ENCODE measurements at regions of chr10 and their contacts with region 1.

Region 1: GRCh38 chr10:77311186-77311585 is 326.4 kb downstream of the KCNMA1 start:
- DNase-seq: no peak
- H3K4me3 ChIP-seq: no peak overlapping the region
- H3K27ac ChIP-seq: no peak overlapping the region
- H3K4me1 ChIP-seq: no peaks in the 10 kb centered on the region
- H3K27me3 ChIP-seq: no peaks in the 10 kb centered on the region
- CTCF ChIP-seq: no peak

Region 2: DNA sequence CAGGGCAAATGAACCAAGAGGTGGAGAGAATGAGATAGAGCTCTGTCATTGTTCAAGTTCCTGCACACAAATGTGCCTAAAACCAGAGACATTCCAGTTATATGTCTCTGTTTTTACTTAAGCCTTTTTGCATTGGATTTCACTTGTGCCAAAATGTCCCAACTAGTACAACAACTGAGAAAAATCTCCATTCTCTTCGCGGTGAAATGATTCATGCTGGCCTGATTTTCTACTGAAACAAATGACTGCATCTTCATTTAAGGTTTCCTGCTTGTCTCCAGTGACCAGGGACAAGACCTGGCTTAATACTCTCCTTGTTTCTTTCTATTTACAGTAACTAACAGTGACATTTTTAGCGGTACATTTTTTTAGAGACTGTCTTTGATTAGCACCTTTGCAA is 388.5 kb before region 1 on chr10:
- CTCF ChIA-PET with region 1: no interaction called
- dilution Hi-C with region 1: no loop called
- in situ Hi-C with region 1: no loop called
- intact Hi-C with region 1: loop called (anchors 5 kb)
- DNase-seq: no peak
- H3K4me3 ChIP-seq: no peak overlapping the region
- H3K27ac ChIP-seq: no peak overlapping the region
- H3K4me1 ChIP-seq: no peaks in the 10 kb centered on the region
- H3K27me3 ChIP-seq: no peaks in the 10 kb centered on the region
- CTCF ChIP-seq: no peak